Psoas muscle (tissue), 8 donors: ENCODE measurements at regions of chr14 and their contacts with region 1.

Region 1: GRCh38 chr14:20682435-20683124 is 1.8 kb upstream of the RNASE4 start:
- DNase-seq: peak; percentile 88 to 94
- ATAC-seq: peak; percentile 84 to 87 (median 86)
- H3K4me3 ChIP-seq: peak overlapping the region; percentile 89
- H3K27ac ChIP-seq: peak overlapping the region; percentile 99
- H3K4me1 ChIP-seq: peaks cover 17% of the 10 kb centered on the region
- H3K27me3 ChIP-seq: no peaks in the 10 kb centered on the region
- CTCF ChIP-seq: no peak

Region 2: GRCh38 chr14:20332788-20333493 is 349.6 kb before region 1 on chr14 and contains the start of gene CCNB1IP1:
- intact Hi-C with region 1: loop called in 1 of 2 experiments (anchors 10 kb)
- DNase-seq: peak; percentile 38 to 70
- ATAC-seq: peak; percentile 96 to 99 (median 98)
- H3K4me3 ChIP-seq: peak within 1 kb of the TSS; percentile 77
- H3K27ac ChIP-seq: peak within 1 kb of the TSS; percentile 85
- H3K4me1 ChIP-seq: peaks cover 14% of the 10 kb centered on the region
- H3K27me3 ChIP-seq: no peaks in the 10 kb centered on the region
- CTCF ChIP-seq: no peak
- total RNA-seq, gene CCNB1IP1: 11.9 to 37.0 (median 28.1) TPM

Region 3: DNA sequence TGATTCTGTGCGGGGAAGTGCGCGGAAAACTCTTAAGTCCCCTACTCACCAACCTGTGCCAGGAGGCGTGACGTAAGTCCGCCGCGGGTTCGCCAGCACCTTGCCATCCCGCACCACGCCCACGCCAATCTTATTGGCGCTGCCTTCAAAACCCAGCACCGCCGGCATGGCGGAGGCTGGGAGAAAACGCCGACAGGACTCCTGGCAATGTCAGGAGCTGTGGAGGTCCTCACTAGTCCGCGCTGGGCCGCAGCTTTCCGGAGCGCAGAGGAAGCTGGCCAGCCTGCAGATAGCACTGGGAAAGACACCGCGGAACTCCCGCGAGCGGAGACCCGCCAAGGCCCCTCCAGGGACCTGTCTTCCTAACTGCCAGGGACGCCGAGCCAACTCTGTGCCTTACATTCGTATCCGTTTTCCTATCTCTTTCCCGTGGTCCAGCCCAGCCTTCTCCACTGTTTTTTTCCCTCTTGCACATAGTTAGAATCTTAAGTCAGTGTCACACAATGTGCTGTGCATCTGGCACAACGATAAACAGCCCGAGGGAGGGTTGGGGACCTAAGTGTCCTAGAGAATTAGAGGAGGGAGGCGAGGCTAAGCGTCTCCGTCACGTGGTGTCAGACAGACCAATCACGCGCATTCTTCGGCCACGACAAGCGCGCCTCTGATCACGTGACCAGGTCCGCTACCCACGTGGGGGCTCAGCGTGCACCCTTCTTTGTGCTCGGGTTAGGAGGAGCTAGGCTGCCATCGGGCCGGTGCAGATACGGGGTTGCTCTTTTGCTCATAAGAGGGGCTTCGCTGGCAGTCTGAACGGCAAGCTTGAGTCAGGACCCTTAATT is 227.8 kb before region 1 on chr14 and contains the starts of genes APEX1 and OSGEP:
- intact Hi-C with region 1: loop called in 1 of 2 experiments (anchors 5 kb)
- DNase-seq: peak; percentile 98 to 99
- ATAC-seq: peak; percentile 93 to 95 (median 94)
- H3K4me3 ChIP-seq: peak within 1 kb of the TSS; percentile 68
- H3K27ac ChIP-seq: peak within 1 kb of the TSS; percentile 92
- H3K4me1 ChIP-seq: peaks cover 32% of the 10 kb centered on the region
- H3K27me3 ChIP-seq: no peaks in the 10 kb centered on the region
- CTCF ChIP-seq: no peak
- total RNA-seq, gene APEX1: 61.1 to 98.4 (median 85.8) TPM
- total RNA-seq, gene OSGEP: 17.2 to 24.4 (median 18.6) TPM

Region 4: DNA sequence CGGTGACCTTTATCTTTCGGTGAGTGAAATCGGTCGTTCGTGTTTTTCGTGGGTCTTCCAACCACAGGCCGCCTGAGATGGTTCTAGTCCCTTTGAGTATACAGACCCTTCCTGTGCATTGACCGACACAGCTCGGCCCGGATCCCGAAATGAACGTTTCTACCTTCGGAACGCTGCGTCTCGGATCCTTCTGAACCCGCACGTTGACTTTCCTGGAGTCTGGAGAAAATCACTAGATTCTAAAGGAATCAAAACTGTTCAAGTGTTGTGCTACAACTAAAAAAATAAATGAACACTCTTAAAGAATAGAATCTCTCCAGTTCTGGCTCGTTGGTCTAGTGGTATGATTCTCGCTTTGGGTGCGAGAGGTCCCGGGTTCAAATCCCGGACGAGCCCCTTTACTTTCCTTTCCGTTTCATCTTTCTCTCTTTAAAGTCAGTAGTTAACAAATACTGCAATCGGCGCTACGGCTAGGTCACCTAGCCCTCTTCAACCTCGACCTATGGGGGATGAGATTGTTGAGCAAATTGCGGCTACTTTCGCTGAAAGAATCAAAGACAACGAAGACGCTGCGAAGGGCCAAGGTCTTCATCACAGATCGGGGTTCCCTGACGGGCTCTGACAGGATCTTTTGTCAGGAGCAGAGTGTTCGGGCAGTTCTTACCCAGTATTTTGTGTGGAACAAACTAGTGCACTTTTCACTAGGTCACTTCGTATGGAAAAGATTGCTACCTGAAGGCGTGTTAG is 49.7 kb before region 1 on chr14:
- intact Hi-C with region 1: loop called in 1 of 2 experiments (anchors 5 kb)
- DNase-seq: no peak
- ATAC-seq: peak; percentile 40 to 60 (median 60)
- H3K4me3 ChIP-seq: peak overlapping the region; percentile 49
- H3K27ac ChIP-seq: no peak overlapping the region
- H3K4me1 ChIP-seq: peaks cover 12% of the 10 kb centered on the region
- H3K27me3 ChIP-seq: peaks cover 0 to 83% (median 16%) of the 10 kb centered on the region in 3 donors
- CTCF ChIP-seq: no peak

Region 5: DNA sequence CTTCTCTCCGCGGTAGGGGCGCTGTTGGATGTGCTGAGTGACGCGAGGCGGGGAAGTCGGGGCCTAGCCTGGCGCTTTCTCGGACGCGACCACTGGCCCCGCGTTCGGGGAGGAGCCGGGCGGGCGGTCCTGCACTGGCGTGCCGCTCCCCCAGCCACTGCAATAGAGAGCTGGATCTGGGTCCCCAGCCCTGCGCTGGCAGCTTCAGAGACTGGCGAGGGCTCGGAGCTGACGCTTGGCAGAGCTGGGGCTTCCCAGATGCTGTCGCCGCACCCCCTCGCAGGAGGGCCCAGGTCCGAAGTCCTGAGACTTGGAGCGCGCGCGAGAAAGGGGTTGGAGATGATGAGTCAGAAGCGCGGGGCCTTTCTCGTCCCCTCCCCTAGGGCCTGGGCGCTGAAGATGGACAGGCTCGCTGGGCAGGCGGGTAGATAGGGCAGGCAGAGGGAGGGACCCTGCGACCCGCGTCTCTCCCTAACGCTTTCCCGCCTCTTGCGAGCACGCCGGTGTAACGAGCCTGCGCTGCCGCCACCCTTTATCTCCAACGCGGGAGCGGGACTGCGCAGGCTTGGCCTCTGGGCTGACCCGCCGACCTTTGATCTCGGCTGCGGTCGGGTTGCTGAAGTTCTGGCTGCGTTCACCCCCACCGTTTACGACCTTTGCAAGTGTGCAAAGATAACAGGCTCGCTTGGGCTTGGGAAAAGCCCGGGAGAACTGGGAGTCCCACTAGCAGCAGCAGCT is 421.3 kb after region 1 on chr14:
- intact Hi-C with region 1: loop called (anchors 10 kb)
- DNase-seq: peak; percentile 96 to 98
- ATAC-seq: peak; percentile 93 to 97 (median 96)
- H3K4me3 ChIP-seq: peak overlapping the region; percentile 94
- H3K27ac ChIP-seq: peak overlapping the region; percentile 100
- H3K4me1 ChIP-seq: peaks cover 38% of the 10 kb centered on the region
- H3K27me3 ChIP-seq: no peaks in the 10 kb centered on the region
- CTCF ChIP-seq: peak; percentile 77